ENCODE measurements at regions of chr1 and their contacts with region 1.

Region 1: DNA sequence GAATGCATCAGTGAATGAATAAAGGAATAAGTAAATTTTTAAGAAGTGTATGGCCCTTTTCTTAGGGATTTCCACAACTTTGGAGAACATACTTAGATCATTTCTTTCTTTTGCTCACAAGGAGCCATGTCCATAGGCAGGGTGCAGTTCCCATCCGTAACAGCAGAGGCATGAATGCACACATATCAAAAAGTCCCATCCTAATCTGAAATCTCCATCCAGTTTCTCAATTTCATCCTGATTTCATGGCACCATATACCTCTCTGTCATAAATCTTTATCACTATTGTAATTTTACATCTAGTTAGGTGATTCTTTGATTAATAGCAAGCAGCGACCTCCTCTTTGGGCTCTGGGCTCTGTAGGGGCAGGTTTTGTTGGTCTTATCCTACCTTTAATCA is 359.2 kb downstream of the RRAGC start:
- DNase-seq: no peak
- ATAC-seq: no peak
- H3K4me3 Mint-ChIP-seq: no peak overlapping the region
- H3K27ac Mint-ChIP-seq: no peak overlapping the region
- H3K4me1 Mint-ChIP-seq: peaks cover 49% of the 10 kb centered on the region
- H3K27me3 Mint-ChIP-seq: no peaks in the 10 kb centered on the region; the same call in 1 of the 2 replicates
- CTCF ChIP-seq: 0 out of 2 replicates have a peak, but pooled peaks have one; percentile 37

Region 2: DNA sequence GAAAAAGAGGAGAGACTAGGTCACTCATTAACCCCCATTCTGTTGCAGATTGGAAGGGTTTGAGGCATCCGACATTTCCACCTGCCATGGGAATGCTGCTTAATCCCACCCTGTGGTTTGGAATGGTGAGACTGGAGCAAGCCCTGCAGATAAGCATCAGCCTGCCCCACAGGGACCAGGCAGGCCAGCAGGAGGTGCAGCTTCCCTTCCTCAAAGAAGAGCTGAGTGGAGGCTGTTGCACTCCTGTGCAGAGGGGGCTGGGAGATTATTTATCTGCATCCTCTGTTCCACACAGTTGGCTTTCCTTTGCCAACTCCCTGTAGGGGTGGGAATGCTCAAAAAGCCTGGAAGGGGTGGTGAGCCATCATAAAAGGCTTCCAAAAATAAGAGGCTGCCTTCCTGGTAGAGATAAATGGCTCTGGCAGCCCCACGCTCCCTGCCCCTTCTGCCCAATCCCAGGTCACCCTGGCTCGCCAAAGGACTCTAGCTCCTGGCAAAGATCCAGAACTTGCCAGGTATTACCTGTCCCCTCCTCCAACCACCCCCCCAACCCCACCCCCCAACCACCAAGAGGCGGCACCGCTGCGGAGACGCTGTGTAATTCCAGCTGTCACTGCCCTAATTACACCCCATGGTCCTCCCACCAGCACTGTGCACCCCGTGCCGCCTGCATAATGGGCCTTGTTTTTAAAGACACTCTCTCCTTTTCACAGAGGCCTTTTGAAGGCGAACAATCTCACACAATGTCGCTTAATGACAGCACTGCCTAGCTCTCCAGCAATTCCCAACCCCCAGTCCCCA is 1108.9 kb before region 1 on chr1:
- CTCF ChIA-PET with region 1: no interaction called
- POLR2A ChIA-PET with region 1: no interaction called
- DNase-seq: peak; percentile 46
- ATAC-seq: peak; percentile 32
- H3K4me3 Mint-ChIP-seq: no peak overlapping the region
- H3K27ac Mint-ChIP-seq: no peak overlapping the region
- H3K4me1 Mint-ChIP-seq: peaks cover 31% of the 10 kb centered on the region
- H3K27me3 Mint-ChIP-seq: no peaks in the 10 kb centered on the region
- CTCF ChIP-seq: no peak

Region 3: GRCh38 chr1:38026592-38027200 is 473.7 kb before region 1 on chr1:
- CTCF ChIA-PET with region 1: interaction called, 69 read pairs
- POLR2A ChIA-PET with region 1: interaction called, 5 read pairs
- DNase-seq: peak; percentile 74
- ATAC-seq: peak; percentile 19
- H3K4me3 Mint-ChIP-seq: no peak overlapping the region
- H3K27ac Mint-ChIP-seq: peak overlapping the region; percentile 57; the same call in 1 of the 2 replicates
- H3K4me1 Mint-ChIP-seq: peaks cover 54% of the 10 kb centered on the region
- H3K27me3 Mint-ChIP-seq: no peaks in the 10 kb centered on the region
- CTCF ChIP-seq: peak; percentile 62

Region 4: GRCh38 chr1:38071312-38072256 is 428.8 kb before region 1 on chr1:
- CTCF ChIA-PET with region 1: interaction called, 13 read pairs
- POLR2A ChIA-PET with region 1: no interaction called
- DNase-seq: no peak
- ATAC-seq: peak; percentile 83
- H3K4me3 Mint-ChIP-seq: no peak overlapping the region
- H3K27ac Mint-ChIP-seq: no peak overlapping the region
- H3K4me1 Mint-ChIP-seq: peaks cover 55% of the 10 kb centered on the region
- H3K27me3 Mint-ChIP-seq: no peaks in the 10 kb centered on the region
- CTCF ChIP-seq: no peak

Region 5: DNA sequence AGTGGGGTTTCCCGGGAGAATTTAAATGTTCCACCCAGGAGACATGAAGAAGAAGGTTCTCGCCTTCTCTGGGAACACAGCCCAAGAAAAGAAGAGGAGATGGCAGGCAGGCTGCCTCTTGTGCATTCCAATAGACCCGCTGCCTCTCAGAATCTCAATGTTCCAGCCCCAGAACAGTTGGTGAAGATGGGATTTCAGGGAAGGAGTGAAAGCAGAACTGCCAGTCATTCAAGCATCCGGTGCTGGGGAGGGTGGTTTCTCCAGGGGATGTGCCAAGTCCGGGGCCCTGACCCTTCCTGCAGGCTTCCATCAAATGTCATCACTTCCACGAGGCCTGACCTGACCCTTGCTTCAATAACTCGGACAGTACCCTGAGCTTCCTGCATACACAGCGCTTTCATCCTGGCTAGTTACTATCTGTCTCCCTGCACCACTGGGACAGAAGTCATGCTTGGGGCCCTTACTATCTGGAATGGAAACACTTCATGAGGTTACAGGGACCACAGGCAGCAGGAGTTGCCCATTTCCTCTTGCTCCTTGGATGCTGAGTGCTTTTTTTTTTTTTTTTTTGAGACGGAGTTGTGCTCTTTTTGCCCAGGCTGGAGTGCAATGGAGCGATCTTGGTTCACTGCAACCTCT is 67.1 kb before region 1 on chr1:
- CTCF ChIA-PET with region 1: interaction called, 11 read pairs
- POLR2A ChIA-PET with region 1: no interaction called
- DNase-seq: no peak
- ATAC-seq: peak; percentile 25
- H3K4me3 Mint-ChIP-seq: 0 out of 2 replicates have a peak overlapping the region, but pooled peaks have one; percentile 5
- H3K27ac Mint-ChIP-seq: peak overlapping the region; percentile 33; the same call in 1 of the 2 replicates
- H3K4me1 Mint-ChIP-seq: peaks cover 46% of the 10 kb centered on the region
- H3K27me3 Mint-ChIP-seq: no peaks in the 10 kb centered on the region
- CTCF ChIP-seq: no peak

Region 6: DNA sequence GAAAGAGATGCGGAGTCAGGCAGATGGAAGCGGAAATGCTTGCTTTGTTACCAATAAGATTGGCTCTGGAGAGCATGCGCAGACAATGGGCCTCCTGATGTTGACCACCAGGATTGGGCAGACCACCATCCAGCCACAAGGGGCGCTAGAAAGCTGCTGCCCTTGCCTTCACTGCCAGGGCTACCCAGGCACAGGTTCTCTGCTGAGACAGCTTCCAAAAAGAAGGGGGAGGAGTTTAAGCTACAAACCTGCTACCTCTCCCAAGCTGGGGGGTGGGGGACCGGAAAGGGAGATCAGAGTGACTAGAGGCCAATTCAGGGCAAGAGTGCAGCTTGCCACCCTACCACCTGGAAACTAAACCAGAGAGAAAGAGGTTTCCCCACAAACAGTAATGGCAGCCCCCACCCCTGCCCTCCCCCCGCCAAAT is 10.5 kb before region 1 on chr1:
- CTCF ChIA-PET with region 1: interaction called, 36 read pairs
- POLR2A ChIA-PET with region 1: interaction called, 4 read pairs
- DNase-seq: peak; percentile 95
- ATAC-seq: peak; percentile 96
- H3K4me3 Mint-ChIP-seq: no peak overlapping the region
- H3K27ac Mint-ChIP-seq: peak overlapping the region; percentile 92
- H3K4me1 Mint-ChIP-seq: peaks cover 55% of the 10 kb centered on the region
- H3K27me3 Mint-ChIP-seq: no peaks in the 10 kb centered on the region; the same call in none of the 2 replicates
- CTCF ChIP-seq: peak; percentile 87

Region 7: GRCh38 chr1:38551318-38552307 is 51.3 kb after region 1 on chr1:
- CTCF ChIA-PET with region 1: no interaction called
- POLR2A ChIA-PET with region 1: no interaction called
- DNase-seq: no peak
- ATAC-seq: no peak
- H3K4me3 Mint-ChIP-seq: no peak overlapping the region
- H3K27ac Mint-ChIP-seq: no peak overlapping the region
- H3K4me1 Mint-ChIP-seq: peaks cover 9% of the 10 kb centered on the region
- H3K27me3 Mint-ChIP-seq: no peaks in the 10 kb centered on the region; the same call in 1 of the 2 replicates
- CTCF ChIP-seq: no peak

Region 8: DNA sequence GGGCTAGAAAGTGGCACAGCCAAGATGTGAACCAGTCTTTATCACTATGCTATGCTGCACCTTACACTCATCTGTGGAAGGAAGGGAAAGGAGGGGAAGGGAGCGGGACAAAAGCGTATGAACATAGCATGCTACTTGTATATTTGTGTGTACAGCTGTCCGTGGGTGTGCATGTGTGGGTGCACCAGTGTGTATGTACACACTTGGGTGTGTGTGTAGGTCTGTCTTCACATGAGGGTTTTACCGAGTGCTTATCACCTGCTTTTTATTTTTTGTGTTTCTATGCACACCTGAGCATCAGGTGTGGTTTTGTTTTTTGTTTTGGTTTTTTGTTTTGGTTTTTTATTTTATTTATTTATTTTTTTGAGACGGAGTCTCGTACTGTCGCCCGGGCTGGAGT is 103.6 kb after region 1 on chr1:
- CTCF ChIA-PET with region 1: no interaction called
- POLR2A ChIA-PET with region 1: no interaction called
- DNase-seq: no peak
- ATAC-seq: no peak
- H3K4me3 Mint-ChIP-seq: no peak overlapping the region
- H3K27ac Mint-ChIP-seq: no peak overlapping the region
- H3K4me1 Mint-ChIP-seq: peaks cover 24% of the 10 kb centered on the region
- H3K27me3 Mint-ChIP-seq: peaks cover 66% of the 10 kb centered on the region
- CTCF ChIP-seq: no peak

Region 9: GRCh38 chr1:38834937-38835827 is 334.8 kb after region 1 on chr1:
- CTCF ChIA-PET with region 1: interaction called, 10 read pairs
- POLR2A ChIA-PET with region 1: no interaction called
- DNase-seq: peak; percentile 37
- ATAC-seq: peak; percentile 87
- H3K4me3 Mint-ChIP-seq: no peak overlapping the region
- H3K27ac Mint-ChIP-seq: no peak overlapping the region
- H3K4me1 Mint-ChIP-seq: peaks cover 22% of the 10 kb centered on the region
- H3K27me3 Mint-ChIP-seq: no peaks in the 10 kb centered on the region
- CTCF ChIP-seq: peak; percentile 68